ENCODE measurements at regions of chr19 and their contacts with region 1.

Region 1: DNA sequence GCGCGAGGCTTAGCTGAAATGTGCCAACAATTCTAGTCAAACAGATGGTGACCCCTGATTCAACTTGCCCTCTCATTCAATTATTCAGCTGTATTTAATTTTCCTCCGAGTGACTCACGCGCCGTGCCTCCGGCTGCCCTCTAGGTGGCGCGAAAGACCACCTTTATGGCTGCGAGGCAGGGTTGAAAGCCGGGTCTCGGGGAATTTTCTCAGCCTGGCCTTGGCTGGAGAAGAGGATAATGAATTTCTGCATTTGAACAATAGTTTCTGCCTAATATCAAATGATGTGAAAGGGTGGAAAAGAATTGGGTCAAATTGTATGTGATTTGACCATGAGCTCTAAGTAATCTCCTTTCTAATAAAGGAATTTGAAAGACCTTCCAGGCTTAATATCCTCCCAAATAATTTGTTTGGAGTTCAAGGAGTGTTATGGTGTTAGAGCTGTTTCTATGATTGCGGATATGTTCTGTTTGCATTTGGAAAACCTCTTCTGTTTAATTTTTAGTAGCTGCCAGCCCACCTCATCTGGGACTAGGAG is 310.9 kb downstream of the ZNF536 start:
- DNase-seq: peak; percentile 78
- ATAC-seq: peak; percentile 58
- H3K4me3 Mint-ChIP-seq: no peak overlapping the region
- H3K27ac Mint-ChIP-seq: no peak overlapping the region
- H3K4me1 Mint-ChIP-seq: peaks cover 35% of the 10 kb centered on the region
- H3K27me3 Mint-ChIP-seq: no peaks in the 10 kb centered on the region
- CTCF ChIP-seq: peak; percentile 80

Region 2: GRCh38 chr19:30649934-30650614 is 33.0 kb before region 1 on chr19:
- CTCF ChIA-PET with region 1: no interaction called
- POLR2A ChIA-PET with region 1: no interaction called
- DNase-seq: peak; percentile 54
- ATAC-seq: peak; percentile 58
- H3K4me3 Mint-ChIP-seq: no peak overlapping the region
- H3K27ac Mint-ChIP-seq: no peak overlapping the region
- H3K4me1 Mint-ChIP-seq: peaks cover 33% of the 10 kb centered on the region
- H3K27me3 Mint-ChIP-seq: no peaks in the 10 kb centered on the region
- CTCF ChIP-seq: peak; percentile 55; the same call in 1 of the 2 replicates

Region 3: GRCh38 chr19:30719189-30719998 is 36.3 kb after region 1 on chr19:
- CTCF ChIA-PET with region 1: interaction called, 11 read pairs
- POLR2A ChIA-PET with region 1: no interaction called
- DNase-seq: peak; percentile 48
- ATAC-seq: peak; percentile 84
- H3K4me3 Mint-ChIP-seq: peak overlapping the region; percentile 68
- H3K27ac Mint-ChIP-seq: no peak overlapping the region
- H3K4me1 Mint-ChIP-seq: peaks cover 29% of the 10 kb centered on the region
- H3K27me3 Mint-ChIP-seq: peaks cover 16% of the 10 kb centered on the region
- CTCF ChIP-seq: no peak